Upper lobe of right lung (tissue), 1 donor: ENCODE measurements at regions of chr10 and their contacts with region 1.

Region 1: DNA sequence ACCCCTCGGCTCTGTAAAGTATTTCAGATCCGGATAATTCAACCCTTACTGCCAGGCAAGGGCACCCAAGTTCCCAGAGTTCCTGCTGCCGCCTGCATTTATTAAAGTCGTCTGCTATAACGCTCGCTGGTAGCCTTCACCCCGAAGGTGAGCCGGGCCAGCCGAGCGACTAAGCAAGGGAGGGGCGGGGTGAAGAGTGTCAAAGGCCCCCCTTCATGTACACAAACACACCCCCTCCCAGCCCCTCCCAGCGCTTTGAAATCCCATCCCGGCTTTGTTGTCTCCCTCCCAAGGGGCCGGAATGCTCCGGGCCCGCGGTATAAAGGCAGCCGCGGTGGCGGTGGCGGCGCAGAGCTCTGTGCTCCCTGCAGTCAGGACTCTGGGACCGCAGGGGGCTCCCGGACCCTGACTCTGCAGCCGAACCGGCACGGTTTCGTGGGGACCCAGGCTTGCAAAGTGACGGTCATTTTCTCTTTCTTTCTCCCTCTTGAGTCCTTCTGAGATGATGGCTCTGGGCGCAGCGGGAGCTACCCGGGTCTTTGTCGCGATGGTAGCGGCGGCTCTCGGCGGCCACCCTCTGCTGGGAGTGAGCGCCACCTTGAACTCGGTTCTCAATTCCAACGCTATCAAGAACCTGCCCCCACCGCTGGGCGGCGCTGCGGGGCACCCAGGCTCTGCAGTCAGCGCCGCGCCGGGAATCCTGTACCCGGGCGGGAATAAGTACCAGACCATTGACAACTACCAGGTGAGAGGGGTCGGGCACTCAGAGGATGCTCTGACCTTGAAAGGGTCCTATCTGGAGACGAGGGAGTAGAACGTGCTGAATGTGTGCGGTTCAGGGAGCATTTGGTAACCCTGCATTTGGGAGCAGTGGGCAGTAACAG is at the start of gene DKK1:
- DNase-seq: peak; percentile 78
- ATAC-seq: peak; percentile 92
- H3K4me3 ChIP-seq: peak within 1 kb of the TSS; percentile 47
- H3K27ac ChIP-seq: no peak within 1 kb of the TSS
- H3K4me1 ChIP-seq: peaks cover 20% of the 10 kb centered on the region
- H3K27me3 ChIP-seq: peaks cover 33% of the 10 kb centered on the region
- CTCF ChIP-seq: peak; percentile 61
- total RNA-seq, gene DKK1: 3.7 TPM

Region 2: GRCh38 chr10:52198540-52198939 is 115.6 kb before region 1 on chr10:
- intact Hi-C with region 1: no loop called
- DNase-seq: no peak
- ATAC-seq: peak; percentile 51
- H3K4me3 ChIP-seq: no peak overlapping the region
- H3K27ac ChIP-seq: no peak overlapping the region
- H3K4me1 ChIP-seq: no peaks in the 10 kb centered on the region
- H3K27me3 ChIP-seq: no peaks in the 10 kb centered on the region
- CTCF ChIP-seq: no peak

Region 3: DNA sequence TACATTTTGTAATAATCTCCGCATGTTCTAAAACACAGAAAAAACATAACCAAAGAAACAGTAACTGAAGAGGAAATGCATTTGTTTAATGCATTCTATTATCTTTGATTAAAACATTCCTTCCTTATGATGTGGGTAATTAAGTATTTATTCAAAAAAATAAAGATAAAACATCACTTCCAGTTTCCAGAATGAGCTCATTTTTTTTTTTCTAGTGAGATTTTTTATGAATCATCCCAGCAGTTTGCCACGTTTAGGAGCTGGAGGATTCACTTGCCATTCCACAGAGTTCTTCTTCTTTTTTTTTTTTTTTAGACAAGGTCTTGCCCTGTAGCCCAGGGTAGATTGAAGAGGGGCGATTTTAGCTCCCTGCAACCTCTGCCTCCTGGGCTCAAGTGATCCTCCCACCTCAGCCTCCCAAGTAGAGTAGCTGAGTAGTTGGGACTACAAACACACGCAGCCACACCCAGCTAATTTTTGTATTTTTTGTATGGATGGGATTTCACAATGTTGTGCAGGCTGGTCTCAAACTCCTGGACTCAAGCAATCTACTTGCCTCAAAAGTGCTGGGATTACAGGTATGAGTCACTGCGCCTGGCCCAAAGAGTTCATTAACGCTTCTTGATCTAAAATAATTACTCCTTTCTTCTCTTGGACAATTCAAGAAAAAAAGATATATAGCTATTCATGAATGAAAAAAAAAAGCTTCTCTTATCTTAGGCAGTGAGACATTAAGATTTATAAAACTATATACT is 177.2 kb after region 1 on chr10:
- intact Hi-C with region 1: loop called (anchors 10 kb)
- DNase-seq: no peak
- ATAC-seq: no peak
- H3K4me3 ChIP-seq: no peak overlapping the region
- H3K27ac ChIP-seq: no peak overlapping the region
- H3K4me1 ChIP-seq: peaks cover 3% of the 10 kb centered on the region
- H3K27me3 ChIP-seq: no peaks in the 10 kb centered on the region
- CTCF ChIP-seq: no peak